Activated CD4-positive, alpha-beta memory T cell treated with anti-CD3 and anti-CD28 coated beads for 36 hours (primary cell): ENCODE measurements at regions of chrX and their contacts with region 1.

Region 1: DNA sequence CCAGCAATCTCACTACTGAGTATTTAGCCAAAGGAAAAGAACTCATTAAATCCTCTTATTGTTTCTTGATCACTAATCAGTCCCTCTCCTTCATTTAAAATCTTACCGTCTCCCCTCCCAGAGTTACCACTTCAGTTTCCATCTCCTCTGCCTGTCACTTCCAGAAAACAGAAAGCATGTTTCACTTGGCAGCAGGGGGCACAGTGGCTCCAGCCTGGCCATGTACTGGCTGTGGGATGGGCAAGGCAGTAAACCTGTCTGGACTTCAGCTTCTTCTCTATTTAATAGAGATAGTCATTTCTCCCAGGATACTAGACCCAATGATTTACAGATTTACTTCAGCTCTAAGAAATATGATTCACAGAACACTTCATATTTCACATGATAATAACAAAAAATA is 63.2 kb downstream of the CD40LG start:
- DNase-seq: peak; percentile 57
- H3K4me3 Mint-ChIP-seq: peak overlapping the region; percentile 1
- H3K27ac Mint-ChIP-seq: peak overlapping the region; percentile 93
- H3K4me1 Mint-ChIP-seq: peaks cover 61% of the 10 kb centered on the region
- H3K27me3 Mint-ChIP-seq: no peaks in the 10 kb centered on the region

Region 2: DNA sequence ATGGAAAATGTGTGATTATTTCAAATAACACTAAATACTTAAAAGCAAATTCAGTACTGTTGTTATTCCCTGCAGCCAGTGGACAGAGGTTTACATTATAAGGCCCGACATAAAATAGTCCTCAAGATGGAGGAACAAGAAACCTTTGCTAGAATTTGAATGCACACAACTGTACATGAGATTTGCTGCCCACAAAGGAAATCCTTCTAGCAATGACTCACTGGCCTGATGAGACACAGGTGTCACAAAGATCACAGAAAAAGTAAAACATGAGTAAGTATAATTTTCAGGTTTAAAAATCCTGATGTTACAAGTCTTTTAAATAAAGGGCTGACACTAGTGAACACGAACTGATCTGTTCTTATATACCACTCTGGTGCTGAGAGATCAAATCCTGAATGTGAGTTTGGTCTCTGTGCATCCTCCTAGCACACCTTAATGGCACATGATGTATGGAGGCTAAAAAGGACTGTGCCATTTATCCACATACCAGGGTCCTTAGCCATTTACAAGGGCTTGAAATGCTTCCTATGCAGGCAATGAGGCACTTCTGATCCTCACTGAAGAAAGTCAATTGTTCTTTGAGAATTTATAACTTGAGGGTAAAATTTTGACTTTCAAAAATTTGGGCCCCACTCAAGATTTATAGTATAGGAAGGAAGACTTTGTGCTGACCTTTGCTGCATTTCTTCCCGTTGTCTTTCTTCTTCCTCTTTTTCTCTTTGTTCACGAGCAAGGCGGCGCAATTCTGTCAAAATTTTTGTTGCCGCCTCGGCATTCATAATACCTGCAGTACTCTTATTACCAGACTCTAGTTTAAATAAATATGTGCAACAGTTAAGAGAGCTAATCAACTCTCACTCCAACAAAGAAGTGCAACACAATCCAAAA is 483.0 kb before region 1 on chrX:
- CTCF ChIA-PET with region 1: no interaction called
- POLR2A ChIA-PET with region 1: no interaction called
- intact Hi-C with region 1: loop called (anchors 10 kb)
- DNase-seq: peak; percentile 25
- H3K4me3 Mint-ChIP-seq: no peak overlapping the region
- H3K27ac Mint-ChIP-seq: peak overlapping the region; percentile 52
- H3K4me1 Mint-ChIP-seq: peaks cover 17% of the 10 kb centered on the region
- H3K27me3 Mint-ChIP-seq: no peaks in the 10 kb centered on the region

Region 3: GRCh38 chrX:136589961-136590537 is 121.1 kb before region 1 on chrX:
- CTCF ChIA-PET with region 1: no interaction called
- POLR2A ChIA-PET with region 1: no interaction called
- intact Hi-C with region 1: no loop called
- DNase-seq: no peak
- H3K4me3 Mint-ChIP-seq: no peak overlapping the region
- H3K27ac Mint-ChIP-seq: peak overlapping the region; percentile 40
- H3K4me1 Mint-ChIP-seq: peaks cover 56% of the 10 kb centered on the region
- H3K27me3 Mint-ChIP-seq: no peaks in the 10 kb centered on the region

Region 4: GRCh38 chrX:136679531-136679930 is 31.6 kb before region 1 on chrX:
- CTCF ChIA-PET with region 1: no interaction called
- POLR2A ChIA-PET with region 1: no interaction called
- intact Hi-C with region 1: no loop called
- DNase-seq: no peak
- H3K4me3 Mint-ChIP-seq: no peak overlapping the region
- H3K27ac Mint-ChIP-seq: no peak overlapping the region
- H3K4me1 Mint-ChIP-seq: peaks cover 51% of the 10 kb centered on the region
- H3K27me3 Mint-ChIP-seq: no peaks in the 10 kb centered on the region

Region 5: GRCh38 chrX:136747003-136747986 is 36.1 kb after region 1 on chrX:
- CTCF ChIA-PET with region 1: no interaction called
- POLR2A ChIA-PET with region 1: no interaction called
- intact Hi-C with region 1: loop called (anchors 2 kb)
- DNase-seq: peak; percentile 57
- H3K4me3 Mint-ChIP-seq: peak overlapping the region; percentile 48
- H3K27ac Mint-ChIP-seq: peak overlapping the region; percentile 93
- H3K4me1 Mint-ChIP-seq: peaks cover 88% of the 10 kb centered on the region
- H3K27me3 Mint-ChIP-seq: no peaks in the 10 kb centered on the region

Region 6: DNA sequence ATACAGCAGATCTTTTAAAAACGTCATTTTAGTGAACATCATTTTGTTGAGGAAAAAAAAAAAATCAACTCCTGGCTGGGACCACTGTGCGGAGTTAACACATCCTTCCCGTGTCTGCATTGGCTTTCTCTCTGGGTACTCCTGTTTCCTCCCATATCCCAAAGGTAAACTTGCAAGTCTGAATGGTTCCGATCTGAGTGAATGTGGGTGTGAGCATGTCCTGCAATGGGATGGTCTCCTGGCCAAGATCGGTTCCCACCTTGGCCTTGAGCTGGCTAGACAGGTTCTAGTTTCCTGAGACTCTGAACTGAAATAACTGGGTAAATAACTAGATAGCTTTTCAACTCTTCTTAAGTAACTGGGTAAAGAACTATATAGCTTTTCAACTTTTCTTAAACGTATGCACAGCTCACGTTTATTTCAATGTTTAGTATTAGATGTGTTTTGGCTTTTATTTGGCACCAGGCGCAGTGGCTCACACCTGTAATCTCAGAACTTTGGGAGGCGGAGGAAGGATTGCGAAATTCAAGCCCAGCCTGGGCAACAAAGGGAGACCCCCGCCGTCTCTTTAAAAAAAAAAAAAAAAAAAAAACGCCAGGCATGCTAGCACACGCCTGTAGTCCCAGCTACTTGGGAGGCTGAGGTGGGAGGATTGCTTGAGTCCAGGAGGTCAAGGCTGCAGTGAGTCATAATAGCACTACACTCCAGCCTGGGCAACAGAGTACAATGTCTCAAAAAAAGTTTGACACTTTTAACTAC is 155.4 kb after region 1 on chrX:
- CTCF ChIA-PET with region 1: interaction called, 3 read pairs
- POLR2A ChIA-PET with region 1: no interaction called
- intact Hi-C with region 1: loop called (anchors 5 kb)
- DNase-seq: no peak
- H3K4me3 Mint-ChIP-seq: no peak overlapping the region
- H3K27ac Mint-ChIP-seq: peak overlapping the region; percentile 77
- H3K4me1 Mint-ChIP-seq: peaks cover 65% of the 10 kb centered on the region
- H3K27me3 Mint-ChIP-seq: no peaks in the 10 kb centered on the region

Region 7: GRCh38 chrX:136920001-136920400 is 208.9 kb after region 1 on chrX:
- CTCF ChIA-PET with region 1: interaction called, 5 read pairs
- POLR2A ChIA-PET with region 1: no interaction called
- intact Hi-C with region 1: loop called (anchors 1 kb)
- DNase-seq: no peak
- H3K4me3 Mint-ChIP-seq: no peak overlapping the region
- H3K27ac Mint-ChIP-seq: no peak overlapping the region
- H3K4me1 Mint-ChIP-seq: peaks cover 2% of the 10 kb centered on the region
- H3K27me3 Mint-ChIP-seq: no peaks in the 10 kb centered on the region

Region 8: GRCh38 chrX:137178392-137178791 is 467.2 kb after region 1 on chrX:
- CTCF ChIA-PET with region 1: no interaction called
- POLR2A ChIA-PET with region 1: no interaction called
- intact Hi-C with region 1: no loop called
- DNase-seq: no peak
- H3K4me3 Mint-ChIP-seq: no peak overlapping the region
- H3K27ac Mint-ChIP-seq: no peak overlapping the region
- H3K4me1 Mint-ChIP-seq: no peaks in the 10 kb centered on the region
- H3K27me3 Mint-ChIP-seq: peaks cover 5% of the 10 kb centered on the region